Activated CD8-positive, alpha-beta memory T cell treated with anti-CD3 and anti-CD28 coated beads, Interleukin-2, amount 10 ng/mL, durations not matched to agents 7 days and 5 days (primary cell): ENCODE measurements at regions of chr1 and their contacts with region 1.

Region 1: GRCh38 chr1:37486680-37487618 is 12.6 kb downstream of the ZC3H12A start:
- DNase-seq: peak; percentile 82
- ATAC-seq: peak; percentile 63
- H3K4me3 Mint-ChIP-seq: no peak overlapping the region
- H3K27ac Mint-ChIP-seq: peak overlapping the region; percentile 65
- H3K4me1 Mint-ChIP-seq: peaks cover 15% of the 10 kb centered on the region
- H3K27me3 Mint-ChIP-seq: no peaks in the 10 kb centered on the region

Region 2: GRCh38 chr1:37449936-37450335 is 37.0 kb before region 1 on chr1:
- CTCF ChIA-PET with region 1: interaction called, 195 read pairs
- DNase-seq: peak; percentile 48
- ATAC-seq: no peak
- H3K4me3 Mint-ChIP-seq: no peak overlapping the region
- H3K27ac Mint-ChIP-seq: peak overlapping the region; percentile 15
- H3K4me1 Mint-ChIP-seq: peaks cover 13% of the 10 kb centered on the region
- H3K27me3 Mint-ChIP-seq: peaks cover 14% of the 10 kb centered on the region

Region 3: DNA sequence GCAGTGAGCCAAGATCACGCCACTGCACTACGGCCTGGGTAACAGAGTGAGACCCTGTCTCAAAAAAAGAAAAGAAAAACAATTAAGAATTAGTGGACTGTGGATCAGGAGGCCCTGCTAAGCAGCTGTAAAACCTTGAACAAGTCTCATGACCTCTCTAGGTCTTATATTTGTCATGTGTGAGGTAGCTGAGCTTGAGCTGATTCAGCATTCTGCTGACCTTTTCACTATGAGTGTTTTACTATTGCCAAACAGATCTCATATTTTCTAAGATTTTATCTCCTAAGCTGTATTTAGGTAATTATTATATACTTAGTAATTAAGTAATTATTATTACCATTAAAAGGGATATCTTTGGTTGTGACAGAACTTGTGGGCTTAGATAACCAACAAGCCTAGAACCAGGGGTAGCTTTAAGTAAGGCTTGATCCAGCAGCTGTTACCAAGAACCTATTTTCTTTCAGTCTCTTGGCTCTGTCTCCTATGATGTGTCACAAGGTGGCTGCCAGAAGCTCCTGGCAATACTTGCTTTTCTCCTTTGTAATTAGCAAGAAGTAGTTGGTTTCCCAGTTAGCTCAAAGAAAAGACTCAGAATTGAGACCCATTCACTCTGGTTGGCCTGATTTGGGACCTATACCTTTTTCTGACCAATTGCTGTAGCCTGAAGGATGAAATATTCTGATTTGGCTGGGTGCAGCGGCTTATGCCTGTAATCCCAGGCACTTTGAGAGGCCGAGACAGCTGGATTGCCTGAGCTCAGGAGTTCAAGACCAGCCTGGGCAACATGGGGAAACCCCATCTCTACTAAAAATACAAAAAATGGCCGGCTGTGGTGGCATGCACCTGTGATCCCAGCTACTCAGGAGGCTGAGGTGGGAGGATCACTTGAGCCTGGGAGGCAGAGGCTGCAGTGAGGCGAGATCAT is 21.1 kb before region 1 on chr1:
- CTCF ChIA-PET with region 1: interaction called, 195 read pairs
- DNase-seq: no peak
- ATAC-seq: no peak
- H3K4me3 Mint-ChIP-seq: no peak overlapping the region
- H3K27ac Mint-ChIP-seq: no peak overlapping the region
- H3K4me1 Mint-ChIP-seq: peaks cover 10% of the 10 kb centered on the region
- H3K27me3 Mint-ChIP-seq: no peaks in the 10 kb centered on the region

Region 4: GRCh38 chr1:37498872-37499617 is 12.1 kb after region 1 on chr1:
- CTCF ChIA-PET with region 1: interaction called, 46 read pairs
- DNase-seq: peak; percentile 16
- ATAC-seq: no peak
- H3K4me3 Mint-ChIP-seq: no peak overlapping the region
- H3K27ac Mint-ChIP-seq: no peak overlapping the region
- H3K4me1 Mint-ChIP-seq: peaks cover 3% of the 10 kb centered on the region
- H3K27me3 Mint-ChIP-seq: no peaks in the 10 kb centered on the region

Region 5: GRCh38 chr1:37514350-37515184 is 27.6 kb after region 1 on chr1 and contains the start of gene MEAF6:
- CTCF ChIA-PET with region 1: interaction called, 18 read pairs
- DNase-seq: peak; percentile 84
- ATAC-seq: peak; percentile 94
- H3K4me3 Mint-ChIP-seq: peak within 1 kb of the TSS; percentile 92
- H3K27ac Mint-ChIP-seq: peak within 1 kb of the TSS; percentile 94
- H3K4me1 Mint-ChIP-seq: peaks cover 43% of the 10 kb centered on the region
- H3K27me3 Mint-ChIP-seq: no peaks in the 10 kb centered on the region
- total RNA-seq, gene MEAF6: 63.2 to 80.7 TPM